ENCODE measurements at regions of chr11 and their contacts with region 1.

Region 1: DNA sequence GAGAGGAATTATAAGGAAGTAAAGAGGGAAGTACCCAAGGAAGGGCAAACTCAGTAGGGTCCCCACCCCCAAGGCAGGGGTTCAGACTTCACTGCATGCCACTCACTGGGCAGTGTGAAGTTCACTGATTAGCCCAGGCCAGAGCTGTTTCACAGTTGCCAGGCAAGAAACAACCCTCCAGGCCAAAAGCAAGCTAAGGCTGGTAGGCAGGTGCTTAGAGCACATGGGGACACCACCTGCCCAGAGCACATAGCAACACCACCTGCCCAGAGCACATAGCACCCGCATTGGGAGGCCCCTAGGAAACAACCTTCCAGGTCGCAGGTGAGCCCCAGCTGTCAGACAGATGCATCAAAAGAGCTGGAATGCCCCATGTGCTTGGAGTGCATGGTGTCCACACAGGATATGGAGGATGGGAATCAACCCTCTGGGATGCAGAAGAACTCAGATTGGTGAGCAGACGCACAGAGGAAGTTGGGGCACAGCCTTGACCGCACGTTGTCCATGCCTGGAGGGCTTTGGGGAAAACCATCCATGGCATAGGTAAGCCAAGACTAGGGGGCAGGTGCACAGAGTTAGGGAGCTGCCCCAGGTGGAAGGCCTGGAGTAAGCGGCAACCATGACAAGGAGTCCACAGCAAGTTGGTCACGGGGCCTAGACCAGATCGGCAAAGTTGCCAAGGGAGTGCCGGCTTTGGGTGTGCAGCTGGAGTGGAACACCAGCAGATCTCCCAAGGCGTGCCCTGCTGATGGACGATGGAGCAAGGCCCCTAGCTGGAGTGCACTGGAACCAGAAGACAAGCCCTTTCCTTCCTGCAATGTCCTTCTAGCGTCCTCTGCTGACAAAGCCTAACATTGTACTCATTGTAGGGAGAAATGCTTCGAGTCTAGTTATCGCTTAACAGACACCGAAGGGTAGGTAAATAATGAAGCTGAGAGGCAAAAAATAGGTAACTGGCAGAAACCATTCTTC is 7.8 kb upstream of the TMEM216 start:
- DNase-seq: peak; percentile 36 to 82 (median 54)
- ATAC-seq: peak; percentile 95
- H3K4me3 ChIP-seq: no peak overlapping the region
- H3K27ac ChIP-seq: no peak overlapping the region
- H3K4me1 ChIP-seq: peaks cover 3 to 6% of the 10 kb centered on the region in 2 experiments; a peak in 2 of 5 replicates
- H3K27me3 ChIP-seq: no peaks in the 10 kb centered on the region
- CTCF ChIP-seq: peak; percentile 84 to 97 (median 91)
- EP300 ChIP-seq: no peak
- POLR2A ChIP-seq: no peak
- RAD21 ChIP-seq: peak; percentile 89 to 98

Region 2: GRCh38 chr11:60816590-60817157 is 567.9 kb before region 1 on chr11:
- CTCF ChIA-PET with region 1: no interaction called
- POLR2A ChIA-PET with region 1: no interaction called
- in situ Hi-C with region 1: no loop called
- intact Hi-C with region 1: no loop called
- DNase-seq: no peak
- ATAC-seq: no peak
- H3K4me3 ChIP-seq: no peak overlapping the region
- H3K27ac ChIP-seq: no peak overlapping the region
- H3K4me1 ChIP-seq: peaks cover 0 to under 1% of the 10 kb centered on the region in 2 experiments; a peak in 1 of 5 replicates
- H3K27me3 ChIP-seq: peaks cover 24 to 44% of the 10 kb centered on the region in 2 experiments; a peak in 4 of 5 replicates
- CTCF ChIP-seq: no peak
- EP300 ChIP-seq: no peak
- POLR2A ChIP-seq: no peak
- RAD21 ChIP-seq: no peak

Region 3: GRCh38 chr11:61254403-61255025 is 130.0 kb before region 1 on chr11:
- CTCF ChIA-PET with region 1: interaction called, 39 read pairs
- POLR2A ChIA-PET with region 1: interaction called, 5 read pairs
- in situ Hi-C with region 1: loop called (anchors 5 kb)
- intact Hi-C with region 1: loop called (anchors 1 kb)
- DNase-seq: peak; percentile 80 to 88 (median 86)
- ATAC-seq: peak; percentile 97
- H3K4me3 ChIP-seq: no peak overlapping the region
- H3K27ac ChIP-seq: no peak overlapping the region
- H3K4me1 ChIP-seq: peaks cover 0 to 13% of the 10 kb centered on the region in 2 experiments; a peak in 2 of 5 replicates
- H3K27me3 ChIP-seq: peaks cover 3 to 17% of the 10 kb centered on the region in 2 experiments; a peak in 3 of 5 replicates
- CTCF ChIP-seq: peak; percentile 90 to 95 (median 94)
- EP300 ChIP-seq: no peak
- POLR2A ChIP-seq: no peak
- RAD21 ChIP-seq: peak; percentile 79 to 92

Region 4: GRCh38 chr11:61279934-61280659 is 104.5 kb before region 1 on chr11:
- CTCF ChIA-PET with region 1: interaction called, 11 read pairs
- POLR2A ChIA-PET with region 1: no interaction called
- in situ Hi-C with region 1: no loop called
- intact Hi-C with region 1: no loop called
- DNase-seq: no peak
- ATAC-seq: no peak
- H3K4me3 ChIP-seq: no peak overlapping the region
- H3K27ac ChIP-seq: no peak overlapping the region
- H3K4me1 ChIP-seq: peaks cover 11 to 19% of the 10 kb centered on the region in 2 experiments; a peak in 4 of 5 replicates
- H3K27me3 ChIP-seq: no peaks in the 10 kb centered on the region
- CTCF ChIP-seq: peak in 1 of 3 experiments; percentile 40; a peak in 1 of 6 replicates
- EP300 ChIP-seq: no peak
- POLR2A ChIP-seq: no peak
- RAD21 ChIP-seq: no peak

Region 5: DNA sequence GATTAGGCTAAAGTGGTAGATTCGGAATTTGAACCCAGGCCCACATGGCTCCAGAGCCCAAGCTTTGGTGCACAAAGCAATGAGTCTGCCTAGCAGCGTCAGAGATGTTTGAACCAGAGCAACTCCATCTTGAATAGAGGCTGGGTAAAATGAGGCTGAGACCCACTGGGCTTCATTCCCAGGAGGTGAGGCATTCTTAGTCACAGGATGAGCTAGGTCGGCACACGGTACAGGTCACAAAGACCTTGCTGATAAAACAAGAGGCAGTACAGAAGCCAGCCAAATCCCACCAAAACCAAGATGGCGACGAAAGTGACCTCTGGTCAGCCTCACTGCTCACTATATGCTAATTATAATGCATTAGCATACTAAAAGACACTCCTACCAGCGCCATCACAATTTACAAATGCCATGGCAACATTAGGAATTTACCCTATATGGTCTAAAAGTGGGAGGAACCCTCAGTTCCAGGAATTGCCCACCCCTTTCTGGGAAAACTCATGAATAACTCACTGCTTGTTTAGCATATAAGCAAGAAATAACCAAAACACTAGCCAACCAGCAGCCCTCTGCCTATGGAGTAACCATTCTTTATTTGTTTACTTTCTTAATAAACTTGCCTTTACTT is 255.4 kb after region 1 on chr11:
- CTCF ChIA-PET with region 1: no interaction called
- POLR2A ChIA-PET with region 1: no interaction called
- in situ Hi-C with region 1: no loop called
- intact Hi-C with region 1: loop called (anchors 5 kb)
- DNase-seq: peak in 1 of 4 experiments; percentile 74
- ATAC-seq: peak; percentile 25
- H3K4me3 ChIP-seq: no peak overlapping the region
- H3K27ac ChIP-seq: no peak overlapping the region
- H3K4me1 ChIP-seq: peaks cover 3 to 5% of the 10 kb centered on the region in 2 experiments; a peak in 3 of 5 replicates
- H3K27me3 ChIP-seq: peaks cover 28 to 34% of the 10 kb centered on the region in 2 experiments
- CTCF ChIP-seq: no peak
- EP300 ChIP-seq: no peak
- POLR2A ChIP-seq: no peak
- RAD21 ChIP-seq: no peak

Measured in K562 (cell line).